HCT116 (cell line): ENCODE measurements at regions of chr20 and their contacts with region 1.

Region 1: DNA sequence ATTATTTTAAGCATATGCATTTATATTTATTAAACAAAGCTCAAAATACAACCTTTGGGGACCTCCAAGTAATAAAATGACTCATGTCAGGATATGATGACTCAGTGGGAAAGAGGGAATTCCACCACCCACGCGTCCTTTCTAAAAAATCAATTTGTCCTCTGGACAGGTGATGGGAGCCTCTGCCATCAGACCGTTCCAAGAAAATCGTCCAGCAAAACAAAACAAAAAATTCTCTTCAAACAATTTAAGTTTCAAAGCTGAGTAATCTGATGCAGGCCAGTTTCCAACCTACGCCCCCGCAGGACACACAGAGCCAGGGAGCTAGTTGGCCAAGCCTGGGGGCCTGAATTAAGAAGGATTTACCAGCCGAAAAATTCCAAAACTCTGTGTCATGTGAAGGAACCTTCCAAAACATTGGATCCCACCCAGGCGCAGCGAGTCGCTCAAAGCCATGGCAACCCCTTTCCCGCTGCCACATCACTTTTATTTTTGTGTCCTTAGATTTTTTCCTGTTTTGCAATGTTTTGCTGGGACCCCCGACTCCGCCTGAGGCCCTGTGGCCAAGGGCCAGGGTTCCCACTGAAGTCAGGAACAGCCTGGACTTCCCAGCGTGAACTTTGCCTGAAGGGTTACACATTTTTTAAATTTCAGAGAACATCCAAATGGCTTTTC is 95.3 kb downstream of the NFATC2 start:
- DNase-seq: peak; percentile 86
- ATAC-seq: peak; percentile 78
- H3K4me3 ChIP-seq: peak overlapping the region in 1 of 2 experiments; percentile 16; a peak in 2 of 4 replicates
- H3K27ac ChIP-seq: peak overlapping the region; percentile 62; the same call in 1 of the 2 replicates
- H3K4me1 ChIP-seq: peaks cover 27 to 34% of the 10 kb centered on the region in 2 experiments
- H3K27me3 ChIP-seq: no peaks in the 10 kb centered on the region; the same call in 1 of the 2 replicates
- CTCF ChIP-seq: no peak
- POLR2A ChIP-seq: no peak
- RAD21 ChIP-seq: peak; percentile 29; the same call in 1 of the 2 replicates

Region 2: GRCh38 chr20:51541189-51542032 is 94.2 kb after region 1 on chr20:
- CTCF ChIA-PET with region 1: no interaction called
- POLR2A ChIA-PET with region 1: no interaction called
- RAD21 ChIA-PET with region 1: no interaction called
- intact Hi-C with region 1: loop called (anchors 5 kb)
- DNase-seq: no peak
- ATAC-seq: no peak
- H3K4me3 ChIP-seq: peak overlapping the region; percentile 44 to 63
- H3K27ac ChIP-seq: peak overlapping the region; percentile 3; the same call in 1 of the 2 replicates
- H3K4me1 ChIP-seq: peaks cover 9 to 23% of the 10 kb centered on the region in 2 experiments; a peak in 3 of 4 replicates
- H3K27me3 ChIP-seq: peaks cover 17% of the 10 kb centered on the region; the same call in 1 of the 2 replicates
- CTCF ChIP-seq: no peak
- POLR2A ChIP-seq: no peak
- RAD21 ChIP-seq: no peak

Region 3: DNA sequence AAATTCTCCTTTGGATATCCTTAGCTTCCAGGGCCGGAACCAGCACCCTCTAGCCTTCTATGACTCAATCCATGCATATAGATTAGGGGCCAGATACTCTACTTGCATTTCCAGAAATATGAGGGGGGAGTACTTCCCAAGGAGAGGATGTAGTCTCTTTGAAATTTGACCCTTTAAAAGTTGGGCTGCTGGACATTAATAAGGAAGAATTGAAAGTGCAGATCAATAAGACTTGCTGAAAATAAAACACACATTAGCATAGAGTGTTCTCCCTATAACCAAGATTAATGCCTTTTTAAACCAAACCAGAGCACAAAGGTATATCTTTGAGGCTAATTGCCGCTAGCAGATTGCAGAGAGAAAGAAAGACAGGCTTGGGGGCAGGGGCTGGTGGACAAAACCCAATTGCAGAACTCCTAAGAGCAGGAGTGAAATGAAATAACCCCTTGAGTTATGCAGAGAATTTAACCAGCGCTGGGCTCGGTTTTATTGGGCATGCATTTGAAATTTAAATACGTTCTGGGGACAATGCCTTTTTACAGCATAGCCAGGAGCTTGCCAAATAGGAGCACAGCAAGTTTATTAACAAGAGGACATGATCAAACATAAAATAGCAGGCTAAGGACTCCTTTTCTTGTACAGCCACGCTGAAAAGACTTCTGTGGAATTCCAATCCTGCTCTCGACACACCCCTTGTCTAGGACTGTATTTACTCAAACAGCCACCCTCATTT is 463.3 kb after region 1 on chr20:
- CTCF ChIA-PET with region 1: no interaction called
- POLR2A ChIA-PET with region 1: no interaction called
- RAD21 ChIA-PET with region 1: no interaction called
- intact Hi-C with region 1: no loop called
- DNase-seq: no peak
- ATAC-seq: no peak
- H3K4me3 ChIP-seq: no peak overlapping the region
- H3K27ac ChIP-seq: no peak overlapping the region
- H3K4me1 ChIP-seq: peaks cover 6 to 11% of the 10 kb centered on the region in 2 experiments; a peak in 2 of 4 replicates
- H3K27me3 ChIP-seq: no peaks in the 10 kb centered on the region
- CTCF ChIP-seq: no peak
- POLR2A ChIP-seq: no peak
- RAD21 ChIP-seq: no peak